ENCODE measurements at regions of chr4 and their contacts with region 1.

Region 1: GRCh38 chr4:10116580-10117358 is at the start of gene WDR1:
- DNase-seq: peak; percentile 95
- H3K4me3 Mint-ChIP-seq: peak within 1 kb of the TSS; percentile 94
- H3K27ac Mint-ChIP-seq: peak within 1 kb of the TSS; percentile 97
- H3K4me1 Mint-ChIP-seq: peaks cover 57% of the 10 kb centered on the region
- H3K27me3 Mint-ChIP-seq: no peaks in the 10 kb centered on the region
- total RNA-seq, gene WDR1: 463 to 465 TPM

Region 2: DNA sequence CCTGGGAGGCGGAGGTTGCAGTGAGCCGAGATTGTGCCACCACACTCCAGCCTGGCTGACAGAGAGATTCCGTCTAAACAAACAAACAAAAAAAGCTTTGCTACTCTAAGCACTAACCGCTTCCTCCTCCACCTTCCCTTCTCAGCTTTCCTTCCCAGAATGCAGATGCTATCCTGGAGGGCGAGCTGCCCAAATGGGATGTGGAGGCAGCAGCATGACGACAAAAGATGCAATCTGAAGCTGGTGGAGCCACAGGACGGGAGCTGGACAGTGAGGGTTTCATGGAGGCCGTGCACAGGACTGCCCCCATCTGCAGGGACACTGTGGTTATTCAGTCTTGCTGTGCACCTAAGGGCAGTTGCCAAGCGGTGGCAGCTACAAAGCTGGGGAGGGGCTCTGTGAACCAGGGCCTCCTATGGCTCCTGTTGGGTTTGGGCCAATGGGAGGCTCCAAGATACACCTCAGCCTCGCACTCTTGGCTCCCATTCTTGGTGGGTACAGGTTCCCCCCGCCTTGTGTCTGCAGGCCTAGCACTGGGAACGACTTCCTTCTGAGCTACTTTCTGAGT is 47.6 kb before region 1 on chr4:
- CTCF ChIA-PET with region 1: no interaction called
- POLR2A ChIA-PET with region 1: no interaction called
- DNase-seq: no peak
- H3K4me3 Mint-ChIP-seq: no peak overlapping the region
- H3K27ac Mint-ChIP-seq: no peak overlapping the region
- H3K4me1 Mint-ChIP-seq: no peaks in the 10 kb centered on the region
- H3K27me3 Mint-ChIP-seq: no peaks in the 10 kb centered on the region

Region 3: DNA sequence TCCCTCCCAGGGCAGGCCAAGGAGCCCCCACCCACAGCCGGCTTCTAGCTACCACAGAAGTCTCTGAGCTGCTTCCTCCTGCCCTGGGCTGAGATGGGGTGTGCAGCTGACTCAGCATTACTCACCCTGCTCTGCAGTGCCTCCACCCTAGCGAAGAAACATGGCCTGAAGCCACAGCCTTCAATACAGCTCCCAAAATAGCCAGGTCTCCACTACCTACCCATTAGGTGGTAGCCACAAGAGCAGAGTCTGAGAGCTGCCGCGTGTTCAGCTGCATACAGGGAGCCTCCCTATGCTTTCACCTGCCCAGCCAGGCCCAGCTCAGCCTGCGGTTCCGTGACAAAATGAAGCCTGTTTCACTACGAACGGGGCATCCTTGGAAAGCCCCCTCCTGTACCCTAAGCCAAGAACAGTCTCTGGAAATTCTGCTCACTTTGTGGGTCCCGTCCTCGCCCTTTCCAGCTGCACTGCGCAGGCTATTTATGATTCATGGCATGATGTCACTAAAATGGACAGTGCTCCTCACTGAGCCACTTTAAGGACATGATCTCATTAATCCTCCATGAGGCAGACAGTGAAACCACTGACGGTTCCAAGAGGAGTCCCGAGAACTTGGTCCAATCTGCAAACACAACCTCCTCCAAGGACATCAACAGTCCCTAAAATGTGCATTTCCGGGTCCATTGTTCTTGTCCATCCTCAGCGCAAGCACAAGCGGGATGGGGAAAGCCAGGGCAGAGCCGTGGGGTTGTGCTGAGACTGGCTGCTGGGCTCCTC is 20.4 kb before region 1 on chr4:
- CTCF ChIA-PET with region 1: interaction called, 26 read pairs
- POLR2A ChIA-PET with region 1: interaction called, 503 read pairs
- DNase-seq: peak; percentile 90
- H3K4me3 Mint-ChIP-seq: peak overlapping the region; percentile 6
- H3K27ac Mint-ChIP-seq: peak overlapping the region; percentile 95
- H3K4me1 Mint-ChIP-seq: peaks cover 97% of the 10 kb centered on the region
- H3K27me3 Mint-ChIP-seq: no peaks in the 10 kb centered on the region

Region 4: GRCh38 chr4:10180927-10181782 is 64.4 kb after region 1 on chr4:
- CTCF ChIA-PET with region 1: interaction called, 6 read pairs
- POLR2A ChIA-PET with region 1: interaction called, 34 read pairs
- DNase-seq: peak; percentile 58
- H3K4me3 Mint-ChIP-seq: no peak overlapping the region
- H3K27ac Mint-ChIP-seq: peak overlapping the region; percentile 90
- H3K4me1 Mint-ChIP-seq: peaks cover 49% of the 10 kb centered on the region
- H3K27me3 Mint-ChIP-seq: no peaks in the 10 kb centered on the region

Region 5: DNA sequence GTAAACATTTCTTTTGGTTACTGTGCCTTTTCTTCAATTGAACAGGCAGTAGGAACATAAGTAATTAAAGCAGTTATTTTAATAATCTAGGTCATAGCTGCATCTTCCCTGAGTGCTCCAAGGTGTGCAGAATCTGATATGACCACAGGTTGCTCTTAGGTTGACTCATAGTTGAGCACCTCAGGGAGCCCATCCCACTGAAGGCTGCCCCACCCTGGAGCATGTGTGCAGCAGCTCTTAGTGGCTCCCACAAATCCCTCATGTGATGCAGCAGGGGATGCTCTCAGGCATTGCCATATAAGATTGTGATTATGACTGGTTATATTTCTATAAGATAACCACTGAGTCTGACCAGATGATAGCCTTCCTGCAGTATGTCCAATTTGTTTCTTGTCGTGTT is 268.2 kb after region 1 on chr4:
- CTCF ChIA-PET with region 1: no interaction called
- POLR2A ChIA-PET with region 1: no interaction called
- DNase-seq: no peak
- H3K4me3 Mint-ChIP-seq: no peak overlapping the region
- H3K27ac Mint-ChIP-seq: no peak overlapping the region
- H3K4me1 Mint-ChIP-seq: no peaks in the 10 kb centered on the region
- H3K27me3 Mint-ChIP-seq: peaks cover 1% of the 10 kb centered on the region

Measured in activated CD4-positive, alpha-beta memory T cell treated with anti-CD3 and anti-CD28 coated beads, Interleukin-2, amount 10 ng/mL, durations not matched to agents 7 days and 5 days (primary cell).